ENCODE measurements at regions of chrX and their contacts with region 1.

Region 1: DNA sequence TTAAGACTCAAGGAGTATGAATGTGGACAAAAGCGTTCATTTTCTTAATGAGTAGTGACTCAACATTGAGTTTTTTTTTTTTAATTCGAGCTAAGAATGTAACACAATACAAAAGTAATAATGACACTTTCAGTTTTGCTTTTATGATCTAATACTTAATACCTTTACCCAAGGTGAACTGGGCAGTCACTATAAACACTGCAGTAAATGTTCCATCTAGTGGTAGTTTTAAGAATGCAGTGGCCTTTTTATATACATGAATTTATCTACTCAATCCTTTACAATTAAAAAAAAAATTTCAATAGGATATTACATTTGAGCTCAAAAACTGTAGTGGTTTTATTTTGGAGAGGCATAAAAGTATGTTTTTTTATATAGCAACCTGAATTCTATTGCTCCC is 33.9 kb downstream of the PDK3 start:
- DNase-seq: peak; percentile 38 to 67 (median 61)
- H3K4me3 ChIP-seq: no peak overlapping the region
- H3K27ac ChIP-seq: no peak overlapping the region
- H3K4me1 ChIP-seq: peaks cover 4 to 12% (median 5%) of the 10 kb centered on the region in 4 experiments
- H3K27me3 ChIP-seq: peaks cover 0 to 6% (median 0%) of the 10 kb centered on the region in 5 experiments

Region 2: DNA sequence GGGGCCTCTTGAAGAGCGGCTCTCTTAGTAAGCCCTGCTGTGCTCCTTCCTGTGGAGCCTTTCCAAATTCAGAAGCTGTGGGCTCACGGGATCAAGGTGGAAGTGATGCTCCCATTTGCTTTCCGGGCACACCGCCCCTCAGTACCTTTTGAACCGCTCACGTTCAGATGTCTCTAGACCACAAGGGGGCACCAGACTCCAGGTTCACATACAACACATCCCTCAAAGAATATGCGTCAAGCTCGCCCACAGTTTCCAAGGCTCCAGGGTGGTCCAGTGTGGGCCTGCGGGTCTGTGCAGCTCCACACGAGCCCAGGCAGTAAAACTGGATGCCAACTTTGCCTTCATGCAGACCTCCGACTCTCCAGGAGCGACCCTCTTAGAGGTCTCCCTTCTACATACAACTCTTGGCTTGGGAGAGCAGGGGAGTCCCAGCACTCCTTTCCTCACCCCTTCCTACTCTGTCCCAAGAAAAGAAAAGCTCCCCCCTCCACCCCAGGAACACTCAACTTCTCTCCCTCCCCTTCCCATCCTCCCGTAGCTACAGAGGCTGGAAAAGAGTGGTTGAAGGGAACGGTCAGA is 127.5 kb before region 1 on chrX:
- CTCF ChIA-PET with region 1: interaction called, 38 read pairs
- POLR2A ChIA-PET with region 1: no interaction called
- DNase-seq: peak; percentile 60 to 82 (median 74)
- H3K4me3 ChIP-seq: peak overlapping the region in 4 of 7 experiments; percentile 2 to 54 (median 35)
- H3K27ac ChIP-seq: no peak overlapping the region
- H3K4me1 ChIP-seq: peaks cover 0 to 10% (median 1%) of the 10 kb centered on the region in 4 experiments
- H3K27me3 ChIP-seq: peaks cover 0 to 32% (median 0%) of the 10 kb centered on the region in 5 experiments

Region 3: DNA sequence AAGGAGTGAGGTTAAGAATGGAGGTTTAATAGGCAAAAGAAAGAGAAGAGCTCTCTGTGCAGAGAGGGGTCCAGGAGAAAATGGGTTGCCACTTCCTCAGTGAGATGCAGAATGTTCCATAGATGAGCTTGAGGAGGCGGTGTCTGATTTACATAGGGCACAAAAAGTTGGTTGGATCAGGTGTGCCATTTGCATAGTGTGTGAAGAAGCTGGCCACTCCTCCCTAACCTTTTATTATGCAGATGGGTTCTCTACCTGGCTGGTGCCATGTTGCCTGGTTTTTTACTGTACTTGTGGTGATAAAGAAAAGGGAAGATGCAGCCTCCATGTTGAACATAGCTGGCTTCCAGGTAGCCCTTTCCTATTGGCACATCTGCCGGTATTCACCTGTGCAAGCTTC is 111.3 kb before region 1 on chrX:
- CTCF ChIA-PET with region 1: interaction called, 201 read pairs
- POLR2A ChIA-PET with region 1: no interaction called
- DNase-seq: no peak
- H3K4me3 ChIP-seq: no peak overlapping the region
- H3K27ac ChIP-seq: no peak overlapping the region
- H3K4me1 ChIP-seq: no peaks in the 10 kb centered on the region
- H3K27me3 ChIP-seq: peaks cover 0 to 12% (median 0%) of the 10 kb centered on the region in 5 experiments

Region 4: GRCh38 chrX:25015486-25016360 is 516.7 kb after region 1 on chrX and contains the start of gene ARX:
- CTCF ChIA-PET with region 1: no interaction called
- POLR2A ChIA-PET with region 1: no interaction called
- DNase-seq: peak; percentile 65 to 82 (median 78)
- H3K4me3 ChIP-seq: no peak within 1 kb of the TSS
- H3K27ac ChIP-seq: no peak within 1 kb of the TSS
- H3K4me1 ChIP-seq: peaks cover 0 to 26% (median 11%) of the 10 kb centered on the region in 4 experiments
- H3K27me3 ChIP-seq: peaks cover 9 to 96% (median 63%) of the 10 kb centered on the region in 5 experiments

Measured in common myeloid progenitor, CD34-positive (primary cell).